Activated B cell treated with CpG ODN at 0.5 μM for 24 hours (primary cell): ENCODE measurements at regions of chr6 and their contacts with region 1.

Region 1: DNA sequence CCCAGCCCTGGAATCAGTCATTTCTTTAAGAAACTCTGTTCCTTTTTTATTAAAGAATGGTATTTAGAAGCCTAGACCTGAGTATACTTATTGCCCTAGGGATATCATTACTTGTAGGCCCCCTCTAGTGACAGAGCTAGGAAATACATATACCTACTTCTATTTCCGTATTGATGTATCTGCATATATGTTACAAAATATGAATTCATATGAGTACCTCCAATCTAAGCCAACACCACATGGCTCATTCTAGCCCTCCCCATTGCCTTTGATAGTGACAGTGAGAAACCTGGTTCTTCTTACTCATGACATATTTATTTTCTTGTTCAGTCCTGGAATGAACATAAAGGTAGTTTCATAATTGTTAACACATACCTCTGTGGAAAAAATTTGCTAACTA is 137.2 kb downstream of the FARS2 start:
- DNase-seq: no peak
- ATAC-seq: peak; percentile 87
- H3K4me3 Mint-ChIP-seq: no peak overlapping the region
- H3K27ac Mint-ChIP-seq: no peak overlapping the region
- H3K4me1 Mint-ChIP-seq: peaks cover 2% of the 10 kb centered on the region
- H3K27me3 Mint-ChIP-seq: no peaks in the 10 kb centered on the region
- CTCF ChIP-seq: no peak

Region 2: GRCh38 chr6:5053038-5053437 is 345.5 kb before region 1 on chr6:
- CTCF ChIA-PET with region 1: no interaction called
- POLR2A ChIA-PET with region 1: no interaction called
- intact Hi-C with region 1: loop called (anchors 1 kb)
- DNase-seq: no peak
- ATAC-seq: no peak
- H3K4me3 Mint-ChIP-seq: no peak overlapping the region
- H3K27ac Mint-ChIP-seq: no peak overlapping the region
- H3K4me1 Mint-ChIP-seq: peaks cover 1% of the 10 kb centered on the region
- H3K27me3 Mint-ChIP-seq: no peaks in the 10 kb centered on the region
- CTCF ChIP-seq: no peak

Region 3: GRCh38 chr6:5214570-5215052 is 183.9 kb before region 1 on chr6:
- CTCF ChIA-PET with region 1: interaction called, 3 read pairs
- POLR2A ChIA-PET with region 1: no interaction called
- intact Hi-C with region 1: loop called (anchors 2 kb)
- DNase-seq: peak; percentile 20
- ATAC-seq: no peak
- H3K4me3 Mint-ChIP-seq: no peak overlapping the region
- H3K27ac Mint-ChIP-seq: no peak overlapping the region
- H3K4me1 Mint-ChIP-seq: peaks cover 11% of the 10 kb centered on the region
- H3K27me3 Mint-ChIP-seq: no peaks in the 10 kb centered on the region
- CTCF ChIP-seq: no peak

Region 4: DNA sequence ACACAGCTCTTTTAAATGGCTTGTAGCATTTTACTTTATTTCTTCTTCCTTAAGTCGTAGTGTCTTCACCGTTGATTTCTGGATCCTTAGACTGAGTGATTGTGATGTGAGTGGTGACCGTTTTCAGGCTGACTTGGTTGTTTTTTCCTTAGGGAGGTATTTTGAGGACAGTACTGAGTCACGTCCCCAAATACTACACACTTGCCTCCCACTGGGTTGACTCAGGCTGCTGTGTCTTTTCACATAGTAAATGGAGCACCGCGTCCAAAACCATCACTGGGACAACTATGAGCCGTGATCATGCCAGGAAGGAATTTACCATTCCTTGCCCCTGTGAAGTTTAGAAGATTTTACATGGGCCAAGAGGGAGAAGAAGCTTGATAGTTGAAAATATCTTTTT is 36.9 kb after region 1 on chr6:
- CTCF ChIA-PET with region 1: no interaction called
- POLR2A ChIA-PET with region 1: no interaction called
- intact Hi-C with region 1: no loop called
- DNase-seq: no peak
- ATAC-seq: no peak
- H3K4me3 Mint-ChIP-seq: no peak overlapping the region
- H3K27ac Mint-ChIP-seq: no peak overlapping the region
- H3K4me1 Mint-ChIP-seq: peaks cover 2% of the 10 kb centered on the region
- H3K27me3 Mint-ChIP-seq: no peaks in the 10 kb centered on the region
- CTCF ChIP-seq: no peak